Upper lobe of right lung (tissue), 1 donor: ENCODE measurements at regions of chr11 and their contacts with region 1.

Region 1: GRCh38 chr11:46427364-46427763 is 35.8 kb upstream of the CHRM4 start:
- DNase-seq: no peak
- ATAC-seq: no peak
- H3K4me3 ChIP-seq: no peak overlapping the region
- H3K27ac ChIP-seq: no peak overlapping the region
- H3K4me1 ChIP-seq: no peaks in the 10 kb centered on the region
- H3K27me3 ChIP-seq: no peaks in the 10 kb centered on the region
- CTCF ChIP-seq: no peak

Region 2: DNA sequence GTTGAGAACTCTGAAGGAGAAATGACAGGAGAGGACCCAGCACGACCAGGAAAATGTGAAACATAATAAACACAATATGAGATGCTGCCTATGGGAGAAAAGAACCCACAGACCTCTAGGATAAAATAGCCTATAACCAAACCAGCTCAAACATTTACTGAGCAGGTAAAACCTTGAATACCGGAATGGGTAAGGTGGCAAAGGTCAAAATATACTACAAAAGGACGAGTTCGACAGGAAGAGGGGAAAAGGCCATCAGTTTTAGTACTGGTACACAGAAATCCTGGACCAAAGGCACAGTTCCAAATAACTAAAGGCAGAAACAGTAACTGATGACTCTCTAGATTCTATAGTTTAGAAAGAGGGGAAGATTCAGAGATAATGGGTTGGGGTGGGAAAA is 70.1 kb after region 1 on chr11:
- intact Hi-C with region 1: loop called (anchors 2 kb)
- DNase-seq: no peak
- ATAC-seq: no peak
- H3K4me3 ChIP-seq: no peak overlapping the region
- H3K27ac ChIP-seq: no peak overlapping the region
- H3K4me1 ChIP-seq: peaks cover 8% of the 10 kb centered on the region
- H3K27me3 ChIP-seq: no peaks in the 10 kb centered on the region
- CTCF ChIP-seq: no peak

Region 3: GRCh38 chr11:46541593-46542371 is 114.4 kb after region 1 on chr11:
- intact Hi-C with region 1: no loop called
- DNase-seq: peak; percentile 89
- ATAC-seq: peak; percentile 92
- H3K4me3 ChIP-seq: no peak overlapping the region
- H3K27ac ChIP-seq: no peak overlapping the region
- H3K4me1 ChIP-seq: no peaks in the 10 kb centered on the region
- H3K27me3 ChIP-seq: no peaks in the 10 kb centered on the region
- CTCF ChIP-seq: no peak

Region 4: DNA sequence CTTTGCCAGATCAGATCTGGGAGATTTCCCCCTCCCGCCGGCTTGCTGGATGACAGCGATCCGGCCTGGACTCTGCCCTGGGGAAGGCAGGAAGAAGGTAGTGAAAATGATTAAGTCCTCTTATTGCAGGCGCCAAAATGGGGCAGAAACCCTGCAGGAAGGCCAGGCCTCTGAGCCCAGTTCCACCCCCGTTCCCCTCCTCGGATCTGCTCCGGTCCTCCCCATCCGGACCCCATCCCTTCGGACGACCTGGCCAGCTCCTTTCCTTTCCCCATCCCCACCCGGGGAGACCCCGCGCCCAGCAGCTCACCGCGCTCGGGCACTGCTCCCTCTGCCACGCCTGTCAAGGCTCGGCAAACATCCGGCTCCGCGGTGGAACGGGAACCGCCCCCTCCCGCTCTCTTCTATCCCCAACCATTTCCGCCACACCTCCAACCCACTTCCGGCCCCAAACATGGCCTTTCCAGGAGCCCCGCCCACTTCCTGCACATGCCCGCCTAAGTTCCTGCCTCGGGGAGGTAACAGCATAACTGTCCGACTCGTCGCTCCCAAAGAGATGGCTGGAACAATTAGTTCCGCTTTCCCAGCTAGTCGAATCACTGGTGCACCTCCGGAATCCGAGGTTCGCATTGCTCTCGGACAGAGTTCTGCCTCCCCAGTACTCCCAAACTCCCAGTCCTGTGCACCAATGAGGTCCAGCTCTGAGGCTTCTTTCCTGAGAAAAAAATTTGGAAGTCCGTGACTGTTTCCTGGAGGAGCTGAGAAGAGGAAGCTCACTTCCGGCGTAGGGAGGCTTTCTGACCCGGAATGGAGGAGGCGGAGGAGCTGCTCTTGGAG is 273.1 kb after region 1 on chr11 and contains the starts of genes ARHGAP1 and ZNF408:
- intact Hi-C with region 1: no loop called
- DNase-seq: peak; percentile 99
- ATAC-seq: peak; percentile 98
- H3K4me3 ChIP-seq: peak within 1 kb of the TSS; percentile 100
- H3K27ac ChIP-seq: peak within 1 kb of the TSS; percentile 98
- H3K4me1 ChIP-seq: peaks cover 37% of the 10 kb centered on the region
- H3K27me3 ChIP-seq: no peaks in the 10 kb centered on the region
- CTCF ChIP-seq: no peak
- total RNA-seq, gene ARHGAP1: 62.8 TPM
- total RNA-seq, gene ZNF408: 9.3 TPM